CD8-positive, alpha-beta memory T cell (primary cell): ENCODE measurements at regions of chr11 and their contacts with region 1.

Region 1: DNA sequence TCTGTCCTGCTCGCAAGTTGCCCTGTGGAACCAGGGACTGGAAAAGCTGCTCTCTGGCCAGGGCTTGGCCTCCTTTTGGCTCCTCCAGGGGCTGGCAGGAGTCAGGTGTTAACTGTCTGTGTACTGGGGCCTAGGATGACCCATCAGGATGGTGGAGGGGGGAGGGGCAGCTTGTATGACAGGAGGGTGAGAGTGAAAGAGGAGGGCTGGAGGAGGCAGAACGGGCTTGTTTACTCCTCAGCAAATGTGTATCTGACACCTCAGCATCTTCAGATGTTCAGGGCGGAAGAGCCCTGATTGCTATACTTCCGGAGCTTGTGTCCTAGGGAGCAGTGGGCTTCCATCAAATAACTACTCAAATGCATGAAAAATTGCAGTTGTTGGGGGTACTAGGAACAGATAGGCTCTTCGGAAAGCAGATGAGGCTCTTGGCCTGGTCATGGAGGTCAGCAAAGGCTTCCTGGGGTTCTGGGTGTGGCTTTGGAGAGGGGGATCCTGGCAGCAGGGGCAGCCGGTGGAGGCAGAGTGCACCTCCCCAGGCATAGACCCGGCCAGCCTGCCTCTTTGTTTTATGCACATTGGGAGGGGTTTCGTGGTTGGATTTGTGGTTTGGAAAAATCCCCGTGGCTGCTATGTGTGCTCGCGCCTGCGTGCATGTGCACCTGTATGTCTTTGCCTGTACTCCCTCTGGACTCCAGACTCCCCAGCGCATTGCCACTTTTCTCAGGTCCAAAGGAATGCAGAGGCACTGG is 31.2 kb downstream of the CD82 start:
- DNase-seq: peak; percentile 40 to 77 (median 63)
- H3K4me3 ChIP-seq: peak overlapping the region; percentile 39
- H3K4me3 Mint-ChIP-seq: peak overlapping the region; percentile 68 to 84 (median 78)
- H3K27ac ChIP-seq: peak overlapping the region; percentile 47
- H3K27ac Mint-ChIP-seq: peak overlapping the region; percentile 93 to 99 (median 94)
- H3K4me1 ChIP-seq: peaks cover 40% of the 10 kb centered on the region
- H3K4me1 Mint-ChIP-seq: peaks cover 39 to 69% (median 54%) of the 10 kb centered on the region in 3 donors
- H3K27me3 ChIP-seq: no peaks in the 10 kb centered on the region
- H3K27me3 Mint-ChIP-seq: no peaks in the 10 kb centered on the region

Region 2: DNA sequence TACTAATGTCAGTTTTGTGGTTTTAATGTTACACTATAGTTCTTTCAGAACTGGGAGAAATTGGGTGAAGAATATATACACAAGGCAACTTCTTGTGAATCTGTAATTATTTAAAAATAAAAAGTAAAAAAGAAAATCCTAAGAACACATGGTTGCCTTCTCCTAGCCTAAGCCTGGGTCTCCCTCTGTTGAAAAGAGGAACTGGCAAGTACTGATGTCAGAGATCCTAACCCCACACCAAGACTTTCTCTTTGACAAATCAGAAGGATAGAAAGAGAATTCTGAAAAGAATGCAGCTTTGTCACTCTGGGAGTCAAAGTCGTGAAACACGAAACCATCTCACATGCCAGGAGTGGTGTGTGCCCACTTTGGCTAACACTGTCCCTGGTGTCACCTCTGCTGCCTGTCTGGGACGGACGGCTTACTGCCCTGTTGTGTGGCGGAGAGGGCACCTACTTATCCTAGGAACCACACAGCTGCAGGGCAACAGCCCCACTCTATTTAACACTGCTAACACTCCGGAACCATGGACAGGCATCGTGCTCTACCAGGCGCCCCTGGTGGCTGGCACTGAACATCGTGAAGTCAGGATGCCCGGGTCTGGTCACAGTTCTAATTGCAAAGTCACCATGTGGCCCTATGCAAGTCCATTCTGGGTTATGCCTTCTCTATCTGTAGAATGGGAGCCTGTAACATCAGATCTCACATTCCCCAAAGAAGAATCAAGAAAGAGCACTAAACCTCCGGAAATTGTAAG is 140.0 kb before region 1 on chr11:
- CTCF ChIA-PET with region 1: no interaction called
- POLR2A ChIA-PET with region 1: no interaction called
- DNase-seq: no peak
- H3K4me3 ChIP-seq: no peak overlapping the region
- H3K4me3 Mint-ChIP-seq: no peak overlapping the region
- H3K27ac ChIP-seq: no peak overlapping the region
- H3K27ac Mint-ChIP-seq: no peak overlapping the region
- H3K4me1 ChIP-seq: no peaks in the 10 kb centered on the region
- H3K4me1 Mint-ChIP-seq: no peaks in the 10 kb centered on the region
- H3K27me3 ChIP-seq: no peaks in the 10 kb centered on the region
- H3K27me3 Mint-ChIP-seq: peaks cover 0 to 5% of the 10 kb centered on the region in 2 donors

Region 3: GRCh38 chr11:44556735-44557409 is 39.8 kb before region 1 on chr11:
- CTCF ChIA-PET with region 1: interaction called, 10 read pairs
- POLR2A ChIA-PET with region 1: no interaction called
- DNase-seq: peak; percentile 50 to 79 (median 57)
- H3K4me3 ChIP-seq: no peak overlapping the region
- H3K4me3 Mint-ChIP-seq: no peak overlapping the region
- H3K27ac ChIP-seq: no peak overlapping the region
- H3K27ac Mint-ChIP-seq: peak overlapping the region in 3 of 8 donors; percentile 25 to 85 (median 31)
- H3K4me1 ChIP-seq: peaks cover 14% of the 10 kb centered on the region
- H3K4me1 Mint-ChIP-seq: peaks cover 14 to 23% (median 16%) of the 10 kb centered on the region in 3 donors
- H3K27me3 ChIP-seq: no peaks in the 10 kb centered on the region
- H3K27me3 Mint-ChIP-seq: peaks cover 0 to 1% of the 10 kb centered on the region in 2 donors

Region 4: DNA sequence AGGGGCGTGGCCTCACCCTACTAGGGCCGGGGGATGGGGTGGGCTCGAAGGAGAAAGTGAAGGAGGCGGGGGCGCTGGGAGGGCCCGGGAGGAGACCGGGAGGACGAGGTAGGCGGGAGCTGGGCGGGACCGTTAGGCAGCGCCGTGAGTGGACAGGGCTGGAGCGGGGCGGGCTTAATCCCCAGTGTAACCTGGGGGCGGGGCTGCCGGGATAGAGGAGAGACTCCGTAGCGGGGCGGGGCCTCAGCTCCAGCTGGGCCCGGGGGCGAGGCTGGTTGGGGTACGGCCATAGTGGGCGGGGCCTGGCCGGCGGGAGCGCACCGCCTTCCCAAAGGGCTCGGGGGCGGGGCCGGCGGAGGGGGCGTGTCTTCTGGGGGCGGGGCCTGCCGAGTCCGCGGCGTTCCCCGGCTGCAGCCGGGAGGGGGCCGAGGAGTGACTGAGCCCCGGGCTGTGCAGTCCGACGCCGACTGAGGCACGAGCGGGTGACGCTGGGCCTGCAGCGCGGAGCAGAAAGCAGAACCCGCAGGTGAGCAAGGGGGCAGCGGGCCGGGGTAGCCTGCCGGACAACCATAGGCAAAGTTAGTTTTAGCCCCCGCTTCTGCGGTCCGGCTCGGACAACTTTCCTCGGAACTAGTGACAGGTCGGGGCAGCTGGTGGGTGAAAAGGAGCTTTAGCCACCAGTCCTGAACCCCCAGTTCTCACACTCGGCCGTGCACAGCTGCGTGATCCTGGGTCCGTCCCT is 31.3 kb before region 1 on chr11 and contains the start of gene CD82:
- CTCF ChIA-PET with region 1: interaction called, 12 read pairs
- POLR2A ChIA-PET with region 1: interaction called, 7 read pairs
- DNase-seq: peak; percentile 91 to 97 (median 96)
- H3K4me3 ChIP-seq: peak within 1 kb of the TSS; percentile 98
- H3K4me3 Mint-ChIP-seq: peak within 1 kb of the TSS; percentile 86 to 94 (median 90)
- H3K27ac ChIP-seq: peak within 1 kb of the TSS; percentile 54
- H3K27ac Mint-ChIP-seq: peak within 1 kb of the TSS; percentile 77 to 96 (median 91)
- H3K4me1 ChIP-seq: peaks cover 54% of the 10 kb centered on the region
- H3K4me1 Mint-ChIP-seq: peaks cover 49 to 62% (median 53%) of the 10 kb centered on the region in 3 donors
- H3K27me3 ChIP-seq: no peaks in the 10 kb centered on the region
- H3K27me3 Mint-ChIP-seq: no peaks in the 10 kb centered on the region
- total RNA-seq, gene CD82: 356 to 388 TPM

Region 5: GRCh38 chr11:44611687-44612434 is 15.2 kb after region 1 on chr11:
- CTCF ChIA-PET with region 1: interaction called, 15 read pairs
- POLR2A ChIA-PET with region 1: interaction called, 12 read pairs
- DNase-seq: peak; percentile 58 to 92 (median 63)
- H3K4me3 ChIP-seq: no peak overlapping the region
- H3K4me3 Mint-ChIP-seq: peak overlapping the region; percentile 9 to 64 (median 38)
- H3K27ac ChIP-seq: peak overlapping the region; percentile 38
- H3K27ac Mint-ChIP-seq: peak overlapping the region; percentile 83 to 99 (median 94)
- H3K4me1 ChIP-seq: peaks cover 76% of the 10 kb centered on the region
- H3K4me1 Mint-ChIP-seq: peaks cover 65 to 94% (median 83%) of the 10 kb centered on the region in 3 donors
- H3K27me3 ChIP-seq: no peaks in the 10 kb centered on the region
- H3K27me3 Mint-ChIP-seq: peaks cover 0 to 2% of the 10 kb centered on the region in 2 donors